Lower lobe of right lung (tissue), 2 donors: ENCODE measurements at regions of chr10 and their contacts with region 1.

Region 1: DNA sequence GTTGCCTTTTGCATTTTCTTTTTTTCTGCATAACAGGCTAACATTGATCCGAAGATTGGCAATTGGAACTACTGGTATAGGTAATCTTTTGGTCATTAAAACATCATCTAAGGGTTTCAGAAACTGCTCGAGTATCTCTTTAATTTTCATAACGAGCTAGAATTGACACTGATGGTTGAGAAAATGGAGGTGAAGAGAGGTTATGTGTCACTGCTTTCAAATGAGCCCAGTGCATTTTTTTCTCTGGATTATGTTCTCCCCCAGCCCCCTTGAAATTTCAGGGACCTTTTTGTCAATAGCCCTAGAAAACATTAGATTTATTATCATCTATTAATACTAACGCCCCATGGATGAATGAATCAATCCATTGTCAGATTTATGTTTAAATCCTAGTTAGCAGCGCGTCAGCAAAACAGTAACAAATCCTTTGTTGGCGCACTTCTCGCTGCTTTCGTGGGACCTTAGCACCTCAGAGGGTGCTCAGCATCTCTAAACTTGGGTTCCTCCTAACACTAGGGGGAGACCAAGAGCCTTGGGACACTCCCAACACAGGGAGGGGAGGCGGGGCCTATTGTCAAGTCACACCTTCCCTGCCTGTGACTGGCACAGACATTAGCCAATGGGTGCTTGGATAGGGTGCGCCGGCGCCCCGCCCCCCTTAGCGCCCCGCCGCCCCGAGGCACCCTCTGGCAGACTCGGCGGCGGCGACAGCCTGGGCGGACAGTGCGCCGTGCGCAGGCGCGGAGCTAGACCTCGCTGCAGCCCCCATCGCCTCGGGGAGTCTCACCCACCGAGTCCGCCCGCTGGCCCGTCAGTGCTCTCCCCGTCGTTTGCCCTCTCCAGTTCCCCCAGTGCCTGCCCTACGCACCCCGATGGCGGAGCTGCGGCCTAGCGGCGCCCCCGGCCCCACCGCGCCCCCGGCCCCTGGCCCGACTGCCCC is at the start of gene SUFU:
- DNase-seq: peak; percentile 97
- ATAC-seq: peak; percentile 87 to 94
- H3K4me3 ChIP-seq: peak within 1 kb of the TSS; percentile 96
- H3K27ac ChIP-seq: peak within 1 kb of the TSS; percentile 90
- H3K4me1 ChIP-seq: peaks cover 67% of the 10 kb centered on the region
- H3K27me3 ChIP-seq: no peaks in the 10 kb centered on the region
- CTCF ChIP-seq: peak; percentile 83
- total RNA-seq, gene SUFU: 14.3 TPM

Region 2: GRCh38 chr10:102384053-102384452 is 119.5 kb before region 1 on chr10:
- intact Hi-C with region 1: no loop called
- DNase-seq: no peak
- ATAC-seq: no peak
- H3K4me3 ChIP-seq: no peak overlapping the region
- H3K27ac ChIP-seq: no peak overlapping the region
- H3K4me1 ChIP-seq: peaks cover 15% of the 10 kb centered on the region
- H3K27me3 ChIP-seq: no peaks in the 10 kb centered on the region
- CTCF ChIP-seq: no peak

Region 3: DNA sequence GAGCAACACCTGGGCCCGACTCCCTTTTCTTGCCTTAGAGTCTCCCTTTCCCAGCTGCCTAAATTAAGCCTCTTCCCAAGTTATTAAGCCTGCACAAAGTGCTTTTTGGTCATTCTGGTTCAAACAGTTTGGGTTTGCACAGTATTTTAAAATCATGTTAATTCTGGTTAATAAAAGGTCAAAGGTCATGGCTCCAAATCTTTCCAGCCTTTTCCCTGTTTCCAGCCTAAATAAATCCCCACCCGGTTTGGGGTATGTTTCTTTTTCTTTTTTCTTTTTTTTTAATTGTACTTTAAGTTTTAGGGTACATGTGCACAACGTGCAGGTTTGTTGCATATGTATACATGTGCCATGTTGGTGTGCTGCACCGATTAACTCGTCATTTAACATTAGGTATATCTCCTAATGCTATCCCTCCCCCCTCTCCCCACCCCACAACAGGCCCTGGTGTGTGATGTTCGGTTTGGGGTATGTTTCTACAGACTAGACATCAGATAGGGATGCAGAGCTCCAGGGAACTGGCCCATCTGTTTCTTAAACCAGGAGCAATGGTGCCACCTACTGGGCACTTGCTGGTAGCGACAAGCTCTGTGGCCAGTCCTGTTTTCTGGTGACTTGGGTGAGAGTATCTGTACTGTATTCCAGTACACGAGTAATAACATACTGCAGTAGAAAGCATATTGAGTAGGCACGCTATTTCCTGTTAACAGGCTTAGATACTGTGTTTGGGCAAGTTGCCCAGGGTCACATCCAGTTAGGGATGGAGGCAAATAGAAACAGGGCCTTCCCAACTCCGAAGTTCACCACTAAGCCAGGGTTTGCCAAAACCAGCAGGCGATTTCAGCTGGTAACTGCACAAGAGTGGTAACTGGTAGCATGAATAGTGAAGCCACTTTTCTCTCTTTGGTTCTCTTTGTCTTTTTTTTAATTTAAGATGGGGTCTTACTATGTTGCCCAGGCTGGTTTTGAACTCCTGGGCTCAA is 80.2 kb after region 1 on chr10:
- intact Hi-C with region 1: loop called (anchors 10 kb)
- DNase-seq: peak; percentile 86
- ATAC-seq: peak; percentile 92 to 95
- H3K4me3 ChIP-seq: no peak overlapping the region
- H3K27ac ChIP-seq: no peak overlapping the region
- H3K4me1 ChIP-seq: peaks cover 46% of the 10 kb centered on the region
- H3K27me3 ChIP-seq: no peaks in the 10 kb centered on the region
- CTCF ChIP-seq: peak; percentile 88